Naive thymus-derived CD4-positive, alpha-beta T cell (primary cell): ENCODE measurements at regions of chr11 and their contacts with region 1.

Region 1: GRCh38 chr11:12361682-12362081 is 15.7 kb upstream of the PARVA start:
- DNase-seq: no peak
- ATAC-seq: no peak
- H3K4me3 ChIP-seq: no peak overlapping the region
- H3K4me3 Mint-ChIP-seq: peak overlapping the region in 1 of 10 donors; percentile 19
- H3K27ac ChIP-seq: no peak overlapping the region
- H3K27ac Mint-ChIP-seq: peak overlapping the region in 8 of 9 donors; percentile 20 to 97 (median 70)
- H3K4me1 ChIP-seq: peaks cover 46 to 56% of the 10 kb centered on the region in 2 donors
- H3K4me1 Mint-ChIP-seq: peaks cover 20 to 83% (median 79%) of the 10 kb centered on the region in 7 donors
- H3K27me3 ChIP-seq: no peaks in the 10 kb centered on the region
- H3K27me3 Mint-ChIP-seq: peaks cover 0 to 4% (median 0%) of the 10 kb centered on the region in 5 donors

Region 2: DNA sequence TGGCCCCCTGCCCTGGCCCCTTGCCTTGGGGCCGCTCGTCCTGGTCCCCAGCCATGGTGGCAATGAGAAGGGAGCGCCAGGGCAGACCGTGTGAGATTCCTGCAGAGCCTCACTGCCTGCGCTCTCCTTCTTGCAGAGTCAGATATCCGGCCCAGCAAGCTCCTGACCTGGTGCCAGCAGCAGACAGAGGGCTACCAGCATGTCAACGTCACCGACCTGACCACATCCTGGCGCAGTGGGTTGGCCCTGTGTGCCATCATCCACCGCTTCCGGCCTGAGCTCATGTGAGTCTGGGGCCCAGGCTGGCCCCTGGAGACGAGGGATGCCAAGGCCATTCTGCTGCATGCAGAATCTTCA is 137.2 kb before region 1 on chr11:
- CTCF ChIA-PET with region 1: no interaction called
- POLR2A ChIA-PET with region 1: no interaction called
- intact Hi-C with region 1: no loop called
- DNase-seq: peak; percentile 55 to 86 (median 81)
- ATAC-seq: peak; percentile 97
- H3K4me3 ChIP-seq: peak overlapping the region; percentile 52
- H3K4me3 Mint-ChIP-seq: peak overlapping the region; percentile 67 to 91 (median 75)
- H3K27ac ChIP-seq: peak overlapping the region; percentile 54
- H3K27ac Mint-ChIP-seq: peak overlapping the region; percentile 87 to 97 (median 91)
- H3K4me1 ChIP-seq: peaks cover 36 to 41% of the 10 kb centered on the region in 2 donors
- H3K4me1 Mint-ChIP-seq: peaks cover 33 to 51% (median 47%) of the 10 kb centered on the region in 7 donors
- H3K27me3 ChIP-seq: no peaks in the 10 kb centered on the region
- H3K27me3 Mint-ChIP-seq: no peaks in the 10 kb centered on the region

Region 3: GRCh38 chr11:12377824-12378593 is 16.3 kb after region 1 on chr11:
- CTCF ChIA-PET with region 1: interaction called, 8 read pairs
- POLR2A ChIA-PET with region 1: interaction called, 37 read pairs
- intact Hi-C with region 1: loop called in 1 of 2 experiments (anchors 1 kb)
- DNase-seq: peak in 4 of 9 donors; percentile 18 to 37 (median 23)
- ATAC-seq: peak; percentile 36
- H3K4me3 ChIP-seq: peak overlapping the region; percentile 17
- H3K4me3 Mint-ChIP-seq: peak overlapping the region; percentile 68 to 89 (median 84)
- H3K27ac ChIP-seq: no peak overlapping the region
- H3K27ac Mint-ChIP-seq: peak overlapping the region in 5 of 9 donors; percentile 54 to 82 (median 65)
- H3K4me1 ChIP-seq: peaks cover 0 to 4% of the 10 kb centered on the region in 2 donors
- H3K4me1 Mint-ChIP-seq: peaks cover 6 to 19% (median 14%) of the 10 kb centered on the region in 7 donors
- H3K27me3 ChIP-seq: no peaks in the 10 kb centered on the region
- H3K27me3 Mint-ChIP-seq: peaks cover 24 to 73% (median 49%) of the 10 kb centered on the region in 5 donors

Region 4: DNA sequence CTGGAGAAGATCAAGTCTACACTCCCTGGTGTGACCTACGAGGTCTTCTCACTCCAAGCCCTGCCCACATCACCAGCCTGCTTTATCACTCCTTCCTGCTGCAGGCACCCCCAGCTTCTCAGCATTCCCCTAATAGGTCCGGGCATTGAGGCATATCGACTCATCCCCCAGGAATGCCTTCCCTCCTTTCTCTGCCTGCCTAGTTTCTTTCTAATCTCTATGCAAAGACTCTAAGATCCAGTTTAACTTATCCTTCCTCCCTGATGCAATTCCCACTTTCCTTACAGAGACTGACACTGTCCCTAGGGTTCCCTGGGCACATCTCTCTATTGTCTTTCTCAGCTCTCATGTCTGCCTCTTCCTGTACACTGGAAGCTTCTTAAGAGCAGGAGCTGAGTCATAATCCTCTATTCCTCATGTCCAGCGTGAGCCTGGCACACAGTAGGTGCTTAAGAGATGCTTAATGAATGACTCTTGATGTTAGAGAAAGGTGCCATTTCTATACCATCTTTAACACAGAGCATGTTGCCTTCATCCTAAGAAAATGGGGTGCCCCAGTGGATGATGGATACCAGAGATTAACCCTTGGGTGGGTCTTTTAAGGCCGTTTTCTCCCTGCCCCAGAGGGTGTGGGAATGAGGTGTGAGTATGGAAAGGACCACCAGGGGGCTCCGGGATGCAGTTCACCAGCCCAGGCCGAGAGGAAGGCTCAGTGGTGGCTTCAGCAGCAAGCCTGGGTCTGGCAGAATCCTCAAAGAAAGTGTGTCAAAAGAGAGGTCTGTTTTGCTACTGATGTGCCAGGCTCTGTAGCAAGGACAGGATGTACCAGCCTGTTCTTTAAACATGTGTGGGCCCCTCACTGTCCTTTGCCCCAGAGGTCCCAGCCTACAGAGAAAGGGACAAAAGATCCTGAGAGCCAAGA is 50.4 kb after region 1 on chr11:
- CTCF ChIA-PET with region 1: no interaction called
- POLR2A ChIA-PET with region 1: interaction called, 3 read pairs
- intact Hi-C with region 1: loop called in 1 of 2 experiments (anchors 5 kb)
- DNase-seq: peak in 5 of 9 donors; percentile 8 to 27 (median 22)
- ATAC-seq: no peak
- H3K4me3 ChIP-seq: no peak overlapping the region
- H3K4me3 Mint-ChIP-seq: no peak overlapping the region
- H3K27ac ChIP-seq: no peak overlapping the region
- H3K27ac Mint-ChIP-seq: no peak overlapping the region
- H3K4me1 ChIP-seq: no peaks in the 10 kb centered on the region
- H3K4me1 Mint-ChIP-seq: no peaks in the 10 kb centered on the region
- H3K27me3 ChIP-seq: no peaks in the 10 kb centered on the region
- H3K27me3 Mint-ChIP-seq: peaks cover 0 to 19% (median 15%) of the 10 kb centered on the region in 5 donors

Region 5: GRCh38 chr11:12581923-12582322 is 220.2 kb after region 1 on chr11:
- CTCF ChIA-PET with region 1: no interaction called
- POLR2A ChIA-PET with region 1: no interaction called
- intact Hi-C with region 1: loop called in 1 of 2 experiments (anchors 10 kb)
- DNase-seq: no peak
- ATAC-seq: no peak
- H3K4me3 ChIP-seq: no peak overlapping the region
- H3K4me3 Mint-ChIP-seq: no peak overlapping the region
- H3K27ac ChIP-seq: no peak overlapping the region
- H3K27ac Mint-ChIP-seq: no peak overlapping the region
- H3K4me1 ChIP-seq: no peaks in the 10 kb centered on the region
- H3K4me1 Mint-ChIP-seq: peaks cover 0 to 6% (median under 1%) of the 10 kb centered on the region in 7 donors
- H3K27me3 ChIP-seq: no peaks in the 10 kb centered on the region
- H3K27me3 Mint-ChIP-seq: peaks cover 11 to 22% (median 18%) of the 10 kb centered on the region in 5 donors

Region 6: DNA sequence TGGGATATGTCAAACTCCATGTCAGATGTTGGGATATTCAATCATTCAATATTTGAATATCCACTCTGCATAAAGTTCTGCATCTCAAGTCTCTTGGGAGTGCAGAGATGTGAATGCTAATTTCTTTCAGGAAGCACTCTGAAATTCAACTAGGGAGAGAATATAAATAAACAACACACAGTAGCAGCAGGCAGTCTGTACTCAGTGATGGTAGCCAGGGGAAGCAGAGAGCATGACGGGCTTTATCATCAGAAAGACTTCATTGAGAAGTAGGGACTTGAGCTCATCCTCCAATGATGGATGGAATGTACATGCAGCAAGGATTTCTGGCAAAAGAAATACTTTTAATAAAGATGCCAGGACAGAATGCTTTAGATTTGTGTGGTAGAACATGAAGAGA is 302.7 kb after region 1 on chr11:
- CTCF ChIA-PET with region 1: no interaction called
- POLR2A ChIA-PET with region 1: no interaction called
- intact Hi-C with region 1: no loop called
- DNase-seq: no peak
- ATAC-seq: no peak
- H3K4me3 ChIP-seq: no peak overlapping the region
- H3K4me3 Mint-ChIP-seq: no peak overlapping the region
- H3K27ac ChIP-seq: no peak overlapping the region
- H3K27ac Mint-ChIP-seq: no peak overlapping the region
- H3K4me1 ChIP-seq: no peaks in the 10 kb centered on the region
- H3K4me1 Mint-ChIP-seq: no peaks in the 10 kb centered on the region
- H3K27me3 ChIP-seq: no peaks in the 10 kb centered on the region
- H3K27me3 Mint-ChIP-seq: peaks cover 57 to 80% (median 70%) of the 10 kb centered on the region in 5 donors